ENCODE measurements at regions of chr3 and their contacts with region 1.

Region 1: DNA sequence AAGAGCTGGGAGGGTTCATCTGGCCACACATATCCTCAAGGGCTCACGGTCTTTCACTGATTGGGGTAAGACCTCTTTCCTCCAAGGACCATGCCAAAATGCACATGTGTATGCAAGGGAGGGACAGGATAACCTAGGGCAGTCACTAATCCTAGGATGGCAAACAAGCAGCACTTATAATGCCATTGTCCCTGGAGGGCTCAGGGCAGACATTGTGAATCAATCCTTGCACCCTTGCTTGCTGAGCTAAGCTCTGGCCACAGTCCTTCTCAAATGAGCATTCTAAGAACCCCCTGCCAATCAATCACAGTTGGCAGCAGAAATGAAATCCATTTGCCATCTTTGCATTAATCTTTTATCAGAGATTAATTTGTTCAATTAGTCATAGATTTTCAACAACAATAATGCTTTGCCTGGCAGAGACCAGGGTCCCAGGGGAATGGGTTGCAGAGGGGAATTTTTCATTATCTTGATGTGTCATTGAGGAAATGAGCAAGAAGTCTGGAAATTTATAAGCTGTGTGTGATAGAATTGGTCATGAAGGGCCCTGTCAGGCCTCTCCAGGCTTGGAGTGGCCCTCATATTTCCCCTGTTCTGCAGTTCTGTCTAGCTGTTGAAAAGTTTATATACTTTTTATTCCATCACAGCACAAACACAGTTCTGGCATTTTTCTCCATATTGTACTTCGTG is 57.2 kb upstream of the KY start:
- DNase-seq: peak; percentile 72
- H3K4me3 ChIP-seq: no peak overlapping the region
- H3K27ac ChIP-seq: peak overlapping the region; percentile 82
- H3K4me1 ChIP-seq: peaks cover 17% of the 10 kb centered on the region
- H3K27me3 ChIP-seq: no peaks in the 10 kb centered on the region
- CTCF ChIP-seq: no peak
- POLR2A ChIP-seq: no peak

Region 2: DNA sequence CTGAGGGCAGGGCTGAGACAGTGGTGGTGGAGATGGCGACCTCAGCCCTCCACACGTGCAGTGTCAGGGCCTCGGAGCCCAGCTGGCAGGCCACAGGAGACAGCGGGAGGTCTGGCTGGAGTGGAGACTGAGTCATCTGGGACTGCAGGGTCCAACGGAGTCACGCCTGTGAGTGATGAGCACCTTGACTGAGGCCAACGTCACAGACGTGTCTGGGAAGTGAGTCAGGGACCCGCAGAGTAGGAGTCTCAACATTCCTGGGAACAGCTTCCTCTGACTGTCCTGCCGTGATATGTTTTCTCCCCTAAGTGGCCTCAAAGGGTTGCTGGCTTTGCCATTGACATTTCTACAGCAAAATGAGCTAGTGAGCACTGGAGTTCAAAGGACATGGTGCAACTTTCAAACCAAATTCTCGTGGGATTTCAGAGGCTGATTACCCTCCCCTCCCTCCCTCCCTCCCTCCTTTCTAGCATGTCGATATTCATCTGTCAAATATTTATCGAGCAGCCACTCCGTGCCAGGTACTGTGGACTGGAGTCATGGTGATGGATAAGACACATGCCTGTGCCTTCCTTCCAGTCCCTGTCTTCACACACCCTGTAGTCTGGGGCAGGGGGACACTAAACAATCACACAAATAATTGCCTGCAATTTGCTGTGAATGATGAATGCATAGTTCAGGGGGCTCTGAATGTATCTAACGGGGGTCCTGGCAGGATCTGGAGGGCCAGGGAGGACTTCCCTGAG is 280.5 kb before region 1 on chr3:
- CTCF ChIA-PET with region 1: no interaction called
- POLR2A ChIA-PET with region 1: no interaction called
- dilution Hi-C with region 1: no loop called
- intact Hi-C with region 1: no loop called
- DNase-seq: peak; percentile 77
- H3K4me3 ChIP-seq: no peak overlapping the region
- H3K27ac ChIP-seq: peak overlapping the region; percentile 73
- H3K4me1 ChIP-seq: peaks cover 8% of the 10 kb centered on the region
- H3K27me3 ChIP-seq: peaks cover 5 to 11% of the 10 kb centered on the region in 2 experiments
- CTCF ChIP-seq: no peak
- POLR2A ChIP-seq: no peak

Region 3: DNA sequence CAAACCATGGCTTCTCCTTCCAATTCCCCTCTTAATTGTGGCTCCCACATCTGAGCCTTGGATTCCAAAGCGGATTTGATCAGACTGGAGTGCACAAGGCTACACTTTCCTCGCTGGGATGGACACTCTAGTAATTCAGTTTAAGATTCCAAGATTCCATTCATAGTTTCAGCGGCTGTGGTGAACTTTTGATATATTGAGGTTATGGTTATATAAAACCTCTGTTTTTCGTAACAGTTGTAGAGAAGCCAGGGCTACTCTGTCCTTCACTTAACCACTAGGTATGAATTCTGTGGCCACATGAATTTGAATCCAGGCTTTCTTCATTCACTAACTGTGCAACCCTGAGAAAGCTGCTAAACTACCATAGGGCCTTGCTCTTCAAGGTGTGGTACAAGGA is 10.7 kb after region 1 on chr3:
- CTCF ChIA-PET with region 1: no interaction called
- POLR2A ChIA-PET with region 1: no interaction called
- dilution Hi-C with region 1: no loop called
- intact Hi-C with region 1: no loop called
- DNase-seq: no peak
- H3K4me3 ChIP-seq: no peak overlapping the region
- H3K27ac ChIP-seq: no peak overlapping the region
- H3K4me1 ChIP-seq: no peaks in the 10 kb centered on the region
- H3K27me3 ChIP-seq: peaks cover 2 to 10% of the 10 kb centered on the region in 2 experiments
- CTCF ChIP-seq: no peak
- POLR2A ChIP-seq: no peak

Region 4: GRCh38 chr3:134846911-134847317 is 138.9 kb after region 1 on chr3:
- CTCF ChIA-PET with region 1: no interaction called
- POLR2A ChIA-PET with region 1: no interaction called
- dilution Hi-C with region 1: no loop called
- intact Hi-C with region 1: loop called (anchors 1 kb)
- DNase-seq: peak; percentile 97
- H3K4me3 ChIP-seq: no peak overlapping the region
- H3K27ac ChIP-seq: peak overlapping the region; percentile 56
- H3K4me1 ChIP-seq: peaks cover 18% of the 10 kb centered on the region
- H3K27me3 ChIP-seq: no peaks in the 10 kb centered on the region
- CTCF ChIP-seq: no peak
- POLR2A ChIP-seq: no peak

Measured in endothelial cell of umbilical vein (primary cell).